CD4-positive, alpha-beta T cell (primary cell): ENCODE measurements at regions of chr6 and their contacts with region 1.

Region 1: GRCh38 chr6:158894193-158894592 is 75.0 kb upstream of the EZR start:
- DNase-seq: no peak
- ATAC-seq: no peak
- H3K4me3 ChIP-seq: no peak overlapping the region
- H3K4me3 Mint-ChIP-seq: no peak overlapping the region
- H3K27ac ChIP-seq: no peak overlapping the region
- H3K27ac Mint-ChIP-seq: no peak overlapping the region
- H3K4me1 ChIP-seq: no peaks in the 10 kb centered on the region
- H3K4me1 Mint-ChIP-seq: no peaks in the 10 kb centered on the region
- H3K27me3 ChIP-seq: no peaks in the 10 kb centered on the region
- H3K27me3 Mint-ChIP-seq: no peaks in the 10 kb centered on the region
- CTCF ChIP-seq: no peak

Region 2: GRCh38 chr6:158793432-158793831 is 100.8 kb before region 1 on chr6:
- CTCF ChIA-PET with region 1: no interaction called
- POLR2A ChIA-PET with region 1: no interaction called
- intact Hi-C with region 1: no loop called
- DNase-seq: peak in 5 of 14 experiments; percentile 3 to 69 (median 65)
- ATAC-seq: peak; percentile 28
- H3K4me3 ChIP-seq: no peak overlapping the region
- H3K4me3 Mint-ChIP-seq: peak overlapping the region; percentile 42
- H3K27ac ChIP-seq: no peak overlapping the region
- H3K27ac Mint-ChIP-seq: peak overlapping the region; percentile 66
- H3K4me1 ChIP-seq: peaks cover 76% of the 10 kb centered on the region
- H3K4me1 Mint-ChIP-seq: peaks cover 88% of the 10 kb centered on the region
- H3K27me3 ChIP-seq: no peaks in the 10 kb centered on the region
- H3K27me3 Mint-ChIP-seq: no peaks in the 10 kb centered on the region
- CTCF ChIP-seq: peak; percentile 51

Region 3: DNA sequence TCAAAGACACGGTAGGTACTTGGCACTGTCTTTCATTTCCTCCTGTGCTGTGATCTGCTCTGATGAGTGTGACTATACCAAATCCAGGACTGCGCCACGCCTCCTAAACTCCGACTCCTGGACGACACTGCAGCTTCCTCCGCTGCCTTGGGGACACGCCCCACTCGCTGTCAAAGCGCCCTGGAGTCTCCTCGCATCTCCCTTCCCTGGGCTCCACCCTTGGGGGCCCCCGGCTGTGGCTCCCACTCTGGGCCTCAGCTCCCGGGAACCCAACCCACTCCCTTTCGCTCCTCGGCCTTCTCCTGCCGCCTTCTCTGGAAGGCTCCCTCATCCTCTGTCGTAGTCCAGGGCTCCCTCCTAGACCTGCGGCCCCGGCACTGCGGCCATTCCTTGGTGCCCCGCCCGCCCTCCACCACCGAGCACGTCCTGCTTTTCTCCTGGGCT is 44.6 kb after region 1 on chr6:
- CTCF ChIA-PET with region 1: no interaction called
- POLR2A ChIA-PET with region 1: no interaction called
- intact Hi-C with region 1: loop called in 1 of 2 experiments (anchors 10 kb)
- DNase-seq: peak in 7 of 14 experiments; percentile 13 to 52 (median 31)
- ATAC-seq: peak; percentile 71
- H3K4me3 ChIP-seq: peak overlapping the region; percentile 43
- H3K4me3 Mint-ChIP-seq: peak overlapping the region; percentile 77
- H3K27ac ChIP-seq: no peak overlapping the region
- H3K27ac Mint-ChIP-seq: no peak overlapping the region
- H3K4me1 ChIP-seq: peaks cover 8% of the 10 kb centered on the region
- H3K4me1 Mint-ChIP-seq: peaks cover 5% of the 10 kb centered on the region
- H3K27me3 ChIP-seq: peaks cover 0 to 2% of the 10 kb centered on the region in 2 experiments
- H3K27me3 Mint-ChIP-seq: no peaks in the 10 kb centered on the region
- CTCF ChIP-seq: no peak